ENCODE measurements at regions of chr22 and their contacts with region 1.

Region 1: GRCh38 chr22:26585104-26585790 is 4.7 kb downstream of the TPST2 start:
- DNase-seq: no peak
- H3K4me3 ChIP-seq: no peak overlapping the region
- H3K27ac ChIP-seq: no peak overlapping the region
- H3K4me1 ChIP-seq: peaks cover 5 to 29% (median 11%) of the 10 kb centered on the region in 4 experiments
- H3K27me3 ChIP-seq: no peaks in the 10 kb centered on the region
- CTCF ChIP-seq: peak in 1 of 3 experiments; percentile 1; a peak in 1 of 4 replicates
- EP300 ChIP-seq: no peak
- POLR2A ChIP-seq: no peak
- RAD21 ChIP-seq: peak in 1 of 2 experiments; percentile 17; a peak in 1 of 4 replicates

Region 2: DNA sequence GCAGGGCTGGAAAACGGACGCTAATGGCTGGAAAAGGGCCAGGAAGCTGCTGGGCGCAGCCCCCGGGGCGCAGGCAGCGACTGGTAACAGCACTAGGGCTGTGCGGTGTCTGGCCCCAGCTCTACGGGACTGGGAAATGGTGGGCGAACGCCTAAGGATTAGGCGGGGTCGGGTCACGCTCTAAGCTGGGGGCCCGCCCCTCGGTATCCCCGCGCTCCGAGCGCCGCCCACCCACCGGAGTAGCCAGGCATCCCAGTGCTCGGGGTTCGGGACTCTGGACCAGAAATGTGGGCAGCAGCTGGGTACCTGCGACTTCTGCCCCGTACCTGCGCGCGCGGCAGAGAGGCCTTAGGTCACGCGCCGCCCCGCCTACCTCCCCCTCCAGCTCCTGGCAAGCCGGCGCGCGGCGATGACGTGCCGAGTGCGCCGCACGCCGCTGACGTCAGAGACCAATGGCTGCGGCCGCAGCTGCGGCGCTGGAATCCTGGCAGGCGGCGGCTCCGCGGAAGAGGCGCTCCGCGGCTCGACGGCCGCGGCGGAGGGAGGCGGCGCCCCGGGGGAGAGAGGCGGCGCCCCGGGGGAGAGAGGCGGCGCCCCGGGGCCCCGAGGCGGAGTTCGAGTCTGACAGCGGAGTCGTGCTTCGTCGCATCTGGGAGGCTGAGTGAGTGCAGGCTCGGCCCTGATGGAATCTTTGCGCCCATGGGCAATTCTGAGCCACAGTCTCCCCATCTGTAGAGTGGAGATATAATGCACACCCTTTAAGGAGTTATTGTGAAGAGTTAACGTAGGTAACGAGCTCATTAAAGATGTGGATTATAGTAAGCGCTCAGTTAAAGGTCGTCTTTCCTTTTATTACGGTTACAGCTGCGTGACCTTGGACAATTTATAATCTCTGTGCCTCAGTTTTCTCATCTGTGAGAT is 101.5 kb before region 1 on chr22 and contains the starts of genes HPS4 and SRRD:
- CTCF ChIA-PET with region 1: no interaction called
- POLR2A ChIA-PET with region 1: no interaction called
- DNase-seq: peak; percentile 62 to 96
- H3K4me3 ChIP-seq: peak within 1 kb of the TSS; percentile 77 to 99 (median 90)
- H3K27ac ChIP-seq: peak within 1 kb of the TSS; percentile 76
- H3K4me1 ChIP-seq: peaks cover 0 to 14% (median 6%) of the 10 kb centered on the region in 4 experiments; a peak in 5 of 7 replicates
- H3K27me3 ChIP-seq: no peaks in the 10 kb centered on the region; a peak in 1 of 7 replicates
- CTCF ChIP-seq: no peak
- EP300 ChIP-seq: peak in 1 of 2 experiments; percentile 85; a peak in 2 of 3 replicates
- POLR2A ChIP-seq: peak; percentile 64 to 92
- RAD21 ChIP-seq: no peak
- total RNA-seq, gene HPS4: 32.9 and 35.2 TPM in 2 replicates
- total RNA-seq, gene SRRD: 25.3 and 26.3 TPM in 2 replicates

Region 3: GRCh38 chr22:26573026-26573662 is 12.1 kb before region 1 on chr22:
- CTCF ChIA-PET with region 1: interaction called, 6 read pairs
- POLR2A ChIA-PET with region 1: interaction called, 17 read pairs
- DNase-seq: no peak
- H3K4me3 ChIP-seq: no peak overlapping the region
- H3K27ac ChIP-seq: no peak overlapping the region
- H3K4me1 ChIP-seq: peaks cover 5 to 28% (median 7%) of the 10 kb centered on the region in 4 experiments
- H3K27me3 ChIP-seq: no peaks in the 10 kb centered on the region
- CTCF ChIP-seq: no peak
- EP300 ChIP-seq: no peak
- POLR2A ChIP-seq: no peak
- RAD21 ChIP-seq: no peak

Region 4: DNA sequence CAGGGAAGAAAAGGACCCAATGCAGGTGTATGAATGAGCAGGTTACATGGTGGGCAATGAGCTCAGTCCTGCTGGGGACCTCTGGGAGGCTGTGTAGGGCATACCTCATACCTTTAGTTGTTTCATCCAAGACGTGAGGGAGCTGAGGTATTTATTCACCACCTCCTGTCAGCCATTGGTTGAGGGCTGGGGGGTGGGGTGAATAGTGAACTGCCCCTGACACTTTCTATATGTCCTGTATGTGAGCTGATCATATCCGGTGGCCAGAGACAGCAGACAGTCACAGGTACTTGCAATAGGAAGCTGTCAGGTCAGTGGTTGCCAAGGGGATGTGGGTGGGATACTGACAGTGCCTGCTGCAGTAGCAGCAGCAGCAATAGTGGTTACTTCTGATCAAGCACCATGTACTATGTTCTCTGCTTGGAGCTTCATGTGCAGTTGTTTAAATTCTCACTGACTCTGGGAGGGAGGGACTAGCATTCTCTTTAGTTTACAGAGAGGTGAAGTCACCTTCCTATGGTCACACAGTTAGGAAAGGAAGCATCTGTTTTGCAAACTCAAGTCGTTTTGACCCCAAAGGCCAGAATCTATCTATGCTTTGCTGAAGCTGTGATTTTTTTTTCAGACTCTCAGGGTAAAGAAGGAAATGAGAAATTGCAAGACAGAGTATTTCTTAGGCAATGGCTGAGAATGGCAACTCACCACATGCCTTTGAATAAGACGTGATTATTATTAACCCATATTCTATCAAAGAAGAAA is 126.1 kb after region 1 on chr22:
- CTCF ChIA-PET with region 1: no interaction called
- POLR2A ChIA-PET with region 1: no interaction called
- DNase-seq: no peak
- H3K4me3 ChIP-seq: no peak overlapping the region
- H3K27ac ChIP-seq: no peak overlapping the region
- H3K4me1 ChIP-seq: no peaks in the 10 kb centered on the region
- H3K27me3 ChIP-seq: no peaks in the 10 kb centered on the region
- CTCF ChIP-seq: no peak
- EP300 ChIP-seq: no peak
- POLR2A ChIP-seq: no peak
- RAD21 ChIP-seq: no peak